Right cardiac atrium (tissue), 5 donors: ENCODE measurements at regions of chr17 and their contacts with region 1.

Region 1: GRCh38 chr17:67390646-67391384 is 13.7 kb downstream of the PITPNC1 start:
- DNase-seq: peak; percentile 63 to 78 (median 67)
- ATAC-seq: peak; percentile 86 to 93
- H3K4me3 ChIP-seq: no peak overlapping the region
- H3K27ac ChIP-seq: peak overlapping the region; percentile 52
- H3K4me1 ChIP-seq: peaks cover 9% of the 10 kb centered on the region
- H3K27me3 ChIP-seq: no peaks in the 10 kb centered on the region

Region 2: DNA sequence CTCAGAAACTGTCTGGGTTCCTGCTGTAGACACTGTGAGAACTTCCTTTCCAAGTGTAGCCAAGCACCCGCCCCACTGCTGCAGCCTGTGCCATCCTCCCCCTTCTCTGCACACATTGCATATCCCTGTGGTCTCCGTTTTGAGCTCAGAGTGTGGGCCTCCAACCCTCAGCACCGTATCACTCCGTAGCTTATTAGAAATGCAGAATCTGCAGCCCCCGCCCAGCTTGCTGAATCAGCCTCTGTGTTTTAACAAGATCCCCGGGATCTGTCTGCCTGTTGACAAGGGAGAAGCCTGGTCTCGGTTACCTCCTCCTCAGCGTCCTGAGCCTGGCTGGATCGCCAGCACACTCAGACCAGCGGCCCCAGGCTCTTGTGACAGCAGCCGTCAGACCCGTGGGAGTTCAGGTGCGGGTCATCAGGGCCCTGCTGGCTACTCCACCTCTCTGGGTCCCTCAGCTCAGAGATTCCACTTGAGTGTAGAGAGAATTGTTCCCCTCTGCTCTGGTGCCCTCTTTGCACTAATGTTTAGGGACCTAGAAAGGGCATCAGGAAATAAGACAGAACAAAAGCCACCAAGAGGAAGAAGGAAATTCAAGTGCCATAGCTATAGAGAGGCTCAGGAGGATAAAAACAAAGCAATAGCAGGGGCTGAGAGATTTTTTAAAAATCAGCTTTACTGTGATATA is 78.5 kb after region 1 on chr17:
- intact Hi-C with region 1: loop called in 1 of 4 experiments (anchors 5 kb)
- DNase-seq: peak in 1 of 3 donors; percentile 39
- ATAC-seq: peak; percentile 50 to 57
- H3K4me3 ChIP-seq: no peak overlapping the region
- H3K27ac ChIP-seq: peak overlapping the region; percentile 77
- H3K4me1 ChIP-seq: peaks cover 2% of the 10 kb centered on the region
- H3K27me3 ChIP-seq: no peaks in the 10 kb centered on the region